ENCODE measurements at regions of chr15 and their contacts with region 1.

Region 1: DNA sequence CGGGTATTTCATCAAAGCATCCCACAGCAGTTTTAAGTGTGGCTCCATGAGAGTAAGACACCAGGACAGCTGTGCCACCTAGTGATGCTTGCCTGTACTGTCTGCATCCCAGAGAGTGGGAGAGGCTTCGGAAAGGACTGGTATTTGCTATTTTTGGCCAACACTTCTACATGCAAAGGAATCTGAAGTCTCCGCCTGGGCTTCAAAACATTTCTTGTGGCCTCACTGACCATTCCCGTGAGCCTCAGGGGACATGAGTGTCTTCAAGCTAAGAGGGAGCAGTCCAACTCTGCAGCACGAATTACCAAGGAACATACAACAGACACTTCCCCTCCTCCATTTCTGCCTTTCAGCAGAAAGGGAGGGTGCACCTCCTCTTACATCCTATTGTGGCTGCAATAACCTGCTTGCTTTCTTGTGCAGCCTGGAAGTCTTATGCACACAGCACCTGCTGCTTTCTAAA is 177.5 kb downstream of the RORA start:
- DNase-seq: no peak

Region 2: GRCh38 chr15:60374628-60375081 is 676.9 kb before region 1 on chr15:
- intact Hi-C with region 1: loop called in 1 of 2 experiments (anchors 5 kb)
- DNase-seq: peak; percentile 83

Region 3: DNA sequence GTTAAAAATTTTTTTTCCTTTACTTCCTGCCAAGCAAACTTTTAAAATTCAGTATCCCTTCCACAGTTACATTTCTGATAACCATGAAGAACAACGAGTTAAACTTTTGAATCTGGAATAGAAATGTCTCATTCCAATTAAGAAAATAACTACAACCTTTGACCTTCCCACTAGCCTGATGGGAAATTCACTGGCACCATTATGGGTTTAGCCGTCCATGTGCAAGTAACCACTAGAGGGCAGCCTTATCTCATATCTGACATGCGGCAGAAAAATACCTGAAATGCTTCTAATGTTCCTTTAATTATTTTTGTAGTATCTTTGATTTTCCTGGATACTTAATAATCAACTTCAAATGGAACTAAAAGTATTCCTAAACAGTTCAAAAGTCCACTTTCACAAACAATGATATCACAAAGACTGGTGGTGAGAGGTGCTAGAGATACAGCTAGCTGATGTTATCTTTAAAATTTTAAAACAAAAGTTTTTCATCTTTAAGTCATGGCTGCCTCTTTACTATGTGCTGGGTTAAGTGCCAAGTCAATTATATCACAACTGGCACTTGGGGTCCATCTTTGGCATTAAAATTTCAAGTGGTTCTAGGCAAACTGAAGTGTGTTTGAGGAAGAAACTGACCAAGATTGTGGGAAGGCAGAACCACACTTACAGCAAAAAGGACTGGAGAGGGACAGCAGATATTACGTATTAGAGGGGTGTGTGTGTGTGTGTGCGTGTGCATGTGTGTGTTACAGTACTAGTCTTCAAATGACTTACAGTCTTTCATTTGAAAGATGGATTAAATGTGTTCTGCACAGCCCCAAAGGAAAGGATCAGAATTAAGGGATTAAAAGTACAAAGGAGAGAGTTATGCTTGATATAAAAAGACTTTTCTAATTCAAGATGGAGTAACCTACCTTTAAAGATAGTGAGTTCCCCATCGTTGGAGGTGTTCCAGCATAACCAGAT is 465.6 kb before region 1 on chr15:
- intact Hi-C with region 1: loop called (anchors 10 kb)
- DNase-seq: no peak

Region 4: GRCh38 chr15:60592371-60593169 is 459.0 kb before region 1 on chr15:
- intact Hi-C with region 1: loop called (anchors 10 kb)
- DNase-seq: peak; percentile 94

Region 5: DNA sequence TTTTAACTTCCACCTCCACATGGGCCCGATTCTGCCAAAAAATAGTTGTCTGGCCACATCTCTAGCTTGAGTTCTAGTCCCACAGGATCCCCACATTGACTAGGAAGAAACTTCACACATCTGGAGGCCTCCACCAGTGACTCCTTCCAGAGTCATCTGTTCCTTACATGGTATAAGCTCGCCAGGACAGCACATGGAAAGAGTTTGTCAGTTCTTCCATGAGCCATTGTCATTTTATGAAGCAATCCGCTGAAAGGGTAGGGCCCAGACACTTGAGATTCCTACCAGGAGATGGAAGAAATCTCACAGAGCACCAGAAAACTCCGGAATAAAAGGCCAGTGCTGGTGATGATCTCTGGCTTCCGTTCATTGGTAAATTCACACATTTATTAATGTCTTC is 222.2 kb before region 1 on chr15:
- intact Hi-C with region 1: loop called in 1 of 2 experiments (anchors 10 kb)
- DNase-seq: no peak

Region 6: DNA sequence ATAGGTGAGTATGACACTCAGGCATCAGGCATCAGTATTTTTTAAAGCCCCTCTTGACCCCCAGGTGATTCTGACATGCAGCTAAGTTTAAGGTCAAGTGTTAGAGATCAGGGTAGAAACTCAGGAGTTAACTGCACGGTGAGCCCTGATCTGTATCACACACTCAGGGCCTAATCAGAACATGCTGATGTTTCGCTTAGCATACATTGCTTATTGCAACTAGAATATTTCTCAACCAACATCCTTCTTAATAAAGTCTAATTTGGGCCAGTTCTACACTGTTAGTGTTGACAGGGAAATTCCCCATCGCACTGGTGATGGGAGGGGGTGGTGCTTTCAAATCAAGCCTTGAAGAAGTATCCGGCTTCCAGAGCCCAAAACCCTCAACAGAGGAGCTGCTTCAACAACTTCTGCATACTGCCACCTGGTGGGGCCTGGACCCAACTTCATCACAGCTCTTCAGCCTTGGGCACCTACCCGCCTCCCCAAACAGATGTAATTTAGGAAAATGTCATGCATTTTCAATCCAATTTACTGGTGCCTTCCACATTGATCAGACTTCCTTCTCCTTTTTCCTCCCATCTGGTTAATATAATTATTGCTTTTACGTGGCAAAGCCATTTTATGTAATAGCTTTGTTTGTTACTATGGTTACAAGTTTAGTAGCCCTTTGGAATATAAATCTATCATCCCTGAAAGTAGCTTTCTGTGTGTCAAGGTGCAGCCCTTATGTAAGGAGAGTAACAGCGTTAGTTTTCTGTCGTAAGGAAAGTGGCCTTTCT is 134.7 kb before region 1 on chr15:
- intact Hi-C with region 1: loop called in 1 of 2 experiments (anchors 5 kb)
- DNase-seq: peak; percentile 92

Measured in posterior vena cava (tissue), 2 donors.